Lower leg skin (tissue), 4 donors: ENCODE measurements at regions of chr3 and their contacts with region 1.

Region 1: GRCh38 chr3:128095222-128095703 is 28.3 kb downstream of the RUVBL1 start:
- DNase-seq: peak; percentile 65 to 91
- H3K4me3 ChIP-seq: no peak overlapping the region
- CTCF ChIP-seq: no peak
- POLR2A ChIP-seq: no peak

Region 2: GRCh38 chr3:127899766-127900165 is 195.5 kb before region 1 on chr3:
- intact Hi-C with region 1: no loop called
- DNase-seq: no peak
- H3K4me3 ChIP-seq: no peak overlapping the region
- CTCF ChIP-seq: no peak
- POLR2A ChIP-seq: no peak

Region 3: GRCh38 chr3:127997961-127998360 is 97.3 kb before region 1 on chr3:
- intact Hi-C with region 1: no loop called
- DNase-seq: peak in 1 of 2 donors; percentile 28
- H3K4me3 ChIP-seq: no peak overlapping the region
- CTCF ChIP-seq: no peak
- POLR2A ChIP-seq: no peak

Region 4: GRCh38 chr3:128503164-128503651 is 407.9 kb after region 1 on chr3:
- intact Hi-C with region 1: loop called (anchors 10 kb)
- DNase-seq: peak in 1 of 2 donors; percentile 79
- H3K4me3 ChIP-seq: no peak overlapping the region
- CTCF ChIP-seq: no peak
- POLR2A ChIP-seq: no peak